Heart left ventricle (tissue), 16 donors: ENCODE measurements at regions of chr11 and their contacts with region 1.

Region 1: DNA sequence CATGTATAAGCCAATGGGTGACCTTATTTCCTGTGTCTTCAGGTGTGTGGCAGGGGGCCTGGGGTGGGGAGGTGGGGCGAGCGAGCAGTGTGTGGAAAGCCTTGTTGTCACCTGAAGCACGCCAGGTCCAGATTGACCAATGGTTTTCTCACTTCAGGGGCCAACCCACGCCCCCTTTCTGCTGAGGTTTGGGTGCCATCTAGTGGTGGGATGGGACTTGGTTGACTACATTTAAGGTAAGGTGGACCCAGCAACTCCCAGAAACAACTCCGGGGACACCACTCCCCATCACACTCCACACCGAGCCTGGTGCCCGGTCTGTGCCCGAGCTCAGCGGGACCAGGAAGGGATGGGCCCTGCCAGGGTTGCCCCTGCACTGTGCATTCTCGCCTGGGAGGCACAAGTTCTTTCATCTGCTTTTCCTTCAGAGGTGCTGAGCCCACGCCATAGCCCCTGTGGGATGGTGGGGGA is 40.0 kb downstream of the TPCN2 start:
- DNase-seq: peak; percentile 60 to 78 (median 69)
- ATAC-seq: peak; percentile 59 to 72 (median 63)
- H3K4me3 ChIP-seq: no peak overlapping the region
- H3K27ac ChIP-seq: peak overlapping the region in 7 of 12 donors; percentile 0 to 88 (median 49)
- H3K4me1 ChIP-seq: peaks cover 0 to 36% (median 9%) of the 10 kb centered on the region in 12 donors
- H3K27me3 ChIP-seq: no peaks in the 10 kb centered on the region
- CTCF ChIP-seq: peak; percentile 56 to 80 (median 74)
- POLR2A ChIP-seq: no peak

Region 2: DNA sequence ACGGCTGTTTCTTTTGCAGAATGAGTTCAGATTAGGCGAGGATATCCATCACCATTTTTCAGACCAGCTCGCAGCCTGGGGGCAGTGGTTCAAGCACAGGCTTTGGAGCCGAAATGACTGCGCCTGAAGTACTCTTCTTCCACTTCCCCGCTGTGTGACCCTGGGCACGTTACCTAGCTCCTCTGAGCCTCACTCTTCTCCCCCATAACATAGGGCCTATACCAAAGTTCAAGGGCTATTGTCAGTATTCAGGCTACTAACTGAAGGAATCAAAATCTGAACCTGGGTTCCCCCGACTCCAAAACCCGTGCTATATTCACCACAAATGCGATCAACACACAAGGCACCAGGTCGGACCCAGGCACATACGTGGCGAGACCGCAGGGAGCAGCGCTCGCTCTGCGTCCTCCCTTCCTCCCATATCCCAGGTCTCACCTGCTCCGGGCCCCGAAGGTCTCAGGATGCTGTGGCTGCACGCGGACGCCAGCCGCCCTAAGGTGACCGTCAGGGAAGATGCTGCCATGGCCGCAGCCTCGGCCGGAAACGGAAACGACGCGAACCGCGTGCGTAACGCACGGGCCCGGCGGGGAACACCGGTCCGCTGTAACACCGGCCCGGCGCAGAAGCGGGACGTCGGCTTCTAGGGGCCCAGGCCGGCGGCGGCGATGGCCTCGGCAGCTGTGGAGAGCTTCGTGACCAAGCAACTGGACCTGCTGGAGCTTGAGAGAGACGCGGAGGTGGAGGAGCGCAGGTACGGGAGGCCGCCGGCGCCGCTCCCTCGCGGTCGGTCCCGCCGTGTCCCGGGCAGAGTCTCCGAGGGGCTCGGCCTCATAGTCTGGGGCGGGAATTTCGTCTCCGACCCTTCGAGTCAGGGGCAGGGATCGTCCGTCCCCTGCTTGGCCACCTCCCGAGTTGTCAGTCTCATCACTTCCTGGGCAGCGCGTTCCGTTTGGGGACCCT is 185.1 kb before region 1 on chr11 and contains the starts of genes IGHMBP2 and MRPL21:
- intact Hi-C with region 1: loop called in 3 of 10 experiments (anchors 2 to 10 kb)
- DNase-seq: peak; percentile 82 to 92 (median 87)
- ATAC-seq: peak; percentile 84 to 96 (median 96)
- H3K4me3 ChIP-seq: peak within 1 kb of the TSS; percentile 73 to 96 (median 86)
- H3K27ac ChIP-seq: peak within 1 kb of the TSS; percentile 39 to 93 (median 86)
- H3K4me1 ChIP-seq: peaks cover 10 to 45% (median 28%) of the 10 kb centered on the region in 12 donors
- H3K27me3 ChIP-seq: no peaks in the 10 kb centered on the region
- CTCF ChIP-seq: peak in 1 of 12 donors; percentile 15
- POLR2A ChIP-seq: peak in 1 of 2 donors; percentile 73
- total RNA-seq, gene IGHMBP2: 8.3 to 18.9 (median 13.7) TPM
- total RNA-seq, gene MRPL21: 59.9 to 120 (median 87.9) TPM

Region 3: GRCh38 chr11:68927280-68928135 is 161.2 kb before region 1 on chr11:
- intact Hi-C with region 1: loop called in 7 of 10 experiments (anchors 5 to 10 kb)
- DNase-seq: peak in 2 of 5 donors; percentile 23 to 59
- ATAC-seq: peak in 3 of 4 donors; percentile 45 to 54 (median 46)
- H3K4me3 ChIP-seq: no peak overlapping the region
- H3K27ac ChIP-seq: peak overlapping the region in 9 of 12 donors; percentile 6 to 82 (median 58)
- H3K4me1 ChIP-seq: peaks cover 13 to 35% (median 27%) of the 10 kb centered on the region in 12 donors
- H3K27me3 ChIP-seq: no peaks in the 10 kb centered on the region
- CTCF ChIP-seq: no peak
- POLR2A ChIP-seq: no peak

Region 4: GRCh38 chr11:68939638-68940555 is 148.8 kb before region 1 on chr11:
- intact Hi-C with region 1: loop called in 1 of 10 experiments (anchors 10 kb)
- DNase-seq: no peak
- ATAC-seq: no peak
- H3K4me3 ChIP-seq: no peak overlapping the region
- H3K27ac ChIP-seq: peak overlapping the region in 1 of 12 donors; percentile 92
- H3K4me1 ChIP-seq: peaks cover 0 to 7% (median 0%) of the 10 kb centered on the region in 12 donors
- H3K27me3 ChIP-seq: no peaks in the 10 kb centered on the region
- CTCF ChIP-seq: no peak
- POLR2A ChIP-seq: no peak

Region 5: GRCh38 chr11:68950268-68950667 is 138.4 kb before region 1 on chr11:
- intact Hi-C with region 1: loop called in 1 of 10 experiments (anchors 10 kb)
- DNase-seq: no peak
- ATAC-seq: no peak
- H3K4me3 ChIP-seq: no peak overlapping the region
- H3K27ac ChIP-seq: peak overlapping the region in 1 of 12 donors; percentile 32
- H3K4me1 ChIP-seq: peaks cover 0 to 19% (median 8%) of the 10 kb centered on the region in 12 donors
- H3K27me3 ChIP-seq: no peaks in the 10 kb centered on the region
- CTCF ChIP-seq: no peak
- POLR2A ChIP-seq: no peak

Region 6: GRCh38 chr11:69010964-69011623 is 77.6 kb before region 1 on chr11:
- intact Hi-C with region 1: loop called in 1 of 10 experiments (anchors 5 kb)
- DNase-seq: peak; percentile 67 to 86 (median 79)
- ATAC-seq: peak in 3 of 4 donors; percentile 61 to 67 (median 64)
- H3K4me3 ChIP-seq: peak overlapping the region in 11 of 12 donors; percentile 24 to 65 (median 49)
- H3K27ac ChIP-seq: peak overlapping the region in 10 of 12 donors; percentile 23 to 93 (median 72)
- H3K4me1 ChIP-seq: peaks cover 0 to 58% (median 32%) of the 10 kb centered on the region in 12 donors
- H3K27me3 ChIP-seq: peaks cover 0 to 43% (median 4%) of the 10 kb centered on the region in 9 donors
- CTCF ChIP-seq: no peak
- POLR2A ChIP-seq: peak in 1 of 2 donors; percentile 29

Region 7: GRCh38 chr11:69048718-69049489 is 39.8 kb before region 1 on chr11 and contains the start of gene TPCN2:
- intact Hi-C with region 1: loop called in 1 of 10 experiments (anchors 2 kb)
- DNase-seq: peak; percentile 93 to 97 (median 96)
- ATAC-seq: peak; percentile 90 to 94 (median 92)
- H3K4me3 ChIP-seq: peak within 1 kb of the TSS; percentile 67 to 100 (median 87)
- H3K27ac ChIP-seq: peak within 1 kb of the TSS; percentile 39 to 98 (median 92)
- H3K4me1 ChIP-seq: peaks cover 0 to 64% (median 49%) of the 10 kb centered on the region in 12 donors
- H3K27me3 ChIP-seq: no peaks in the 10 kb centered on the region
- CTCF ChIP-seq: no peak
- POLR2A ChIP-seq: peak in 1 of 2 donors; percentile 86
- total RNA-seq, gene TPCN2: 4.1 to 17.6 (median 7.5) TPM